ENCODE measurements at regions of chr13 and their contacts with region 1.

Region 1: DNA sequence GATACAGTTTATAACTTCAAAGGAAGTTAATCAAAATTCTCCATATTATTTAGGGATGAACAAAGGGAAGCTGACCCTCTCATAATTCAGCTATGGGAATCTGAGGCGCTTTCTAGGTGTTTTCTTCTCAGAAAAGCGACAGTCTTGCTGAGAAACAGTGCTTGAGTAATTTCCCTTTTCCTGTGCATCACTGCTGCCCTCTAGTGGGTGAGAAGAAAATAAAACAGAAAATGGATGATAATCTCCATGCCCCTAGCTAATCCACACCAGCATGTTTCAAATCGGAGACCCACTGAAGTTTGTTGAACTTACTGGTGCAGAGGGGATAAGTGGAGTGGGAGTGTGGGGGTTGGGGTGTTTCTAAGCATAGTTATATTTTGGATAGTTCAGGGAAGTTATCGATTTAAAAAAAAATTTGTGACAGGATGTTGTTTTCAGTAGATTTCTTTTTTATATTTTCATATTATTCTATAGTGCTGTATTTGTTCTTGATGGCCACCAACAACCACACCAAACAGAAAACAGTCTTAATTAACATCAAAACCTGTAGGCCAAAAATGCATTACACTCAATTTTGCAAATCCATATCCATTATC is 21.4 kb downstream of the LCP1 start:
- DNase-seq: no peak
- H3K4me3 ChIP-seq: no peak overlapping the region
- H3K27ac ChIP-seq: no peak overlapping the region
- H3K4me1 ChIP-seq: no peaks in the 10 kb centered on the region
- H3K27me3 ChIP-seq: no peaks in the 10 kb centered on the region
- CTCF ChIP-seq: peak; percentile 87

Region 2: DNA sequence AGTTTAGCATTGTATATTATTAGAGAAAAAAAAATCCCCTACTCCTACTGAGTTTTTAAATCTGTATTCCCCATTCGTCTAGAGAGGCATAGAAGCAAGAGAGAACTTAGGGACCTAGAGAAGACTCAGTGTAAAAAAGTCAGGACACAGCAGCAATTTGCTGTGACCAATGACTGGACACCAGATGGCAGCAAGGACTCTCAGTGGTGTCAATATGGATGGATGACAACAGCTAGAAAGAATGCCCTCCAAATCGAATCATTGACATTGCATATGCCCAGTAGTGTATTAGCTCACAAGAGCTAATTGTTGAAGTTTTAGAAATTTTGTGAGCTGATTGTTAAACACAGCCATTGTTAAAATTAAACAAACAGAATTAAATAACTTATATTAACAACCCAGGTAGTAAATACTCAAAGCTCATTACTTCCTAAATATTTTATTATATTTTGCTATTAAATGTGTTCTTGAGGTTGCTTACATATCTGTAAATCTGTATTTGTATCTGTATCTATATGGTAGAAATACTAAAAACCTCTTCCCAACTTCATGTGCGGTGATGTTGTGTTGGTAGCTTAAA is 353.0 kb before region 1 on chr13:
- CTCF ChIA-PET with region 1: no interaction called
- POLR2A ChIA-PET with region 1: no interaction called
- intact Hi-C with region 1: loop called (anchors 1 kb)
- DNase-seq: peak; percentile 24 to 56
- H3K4me3 ChIP-seq: no peak overlapping the region
- H3K27ac ChIP-seq: no peak overlapping the region
- H3K4me1 ChIP-seq: no peaks in the 10 kb centered on the region
- H3K27me3 ChIP-seq: peaks cover 7% of the 10 kb centered on the region; the same call in 1 of the 2 replicates
- CTCF ChIP-seq: peak; percentile 74

Region 3: DNA sequence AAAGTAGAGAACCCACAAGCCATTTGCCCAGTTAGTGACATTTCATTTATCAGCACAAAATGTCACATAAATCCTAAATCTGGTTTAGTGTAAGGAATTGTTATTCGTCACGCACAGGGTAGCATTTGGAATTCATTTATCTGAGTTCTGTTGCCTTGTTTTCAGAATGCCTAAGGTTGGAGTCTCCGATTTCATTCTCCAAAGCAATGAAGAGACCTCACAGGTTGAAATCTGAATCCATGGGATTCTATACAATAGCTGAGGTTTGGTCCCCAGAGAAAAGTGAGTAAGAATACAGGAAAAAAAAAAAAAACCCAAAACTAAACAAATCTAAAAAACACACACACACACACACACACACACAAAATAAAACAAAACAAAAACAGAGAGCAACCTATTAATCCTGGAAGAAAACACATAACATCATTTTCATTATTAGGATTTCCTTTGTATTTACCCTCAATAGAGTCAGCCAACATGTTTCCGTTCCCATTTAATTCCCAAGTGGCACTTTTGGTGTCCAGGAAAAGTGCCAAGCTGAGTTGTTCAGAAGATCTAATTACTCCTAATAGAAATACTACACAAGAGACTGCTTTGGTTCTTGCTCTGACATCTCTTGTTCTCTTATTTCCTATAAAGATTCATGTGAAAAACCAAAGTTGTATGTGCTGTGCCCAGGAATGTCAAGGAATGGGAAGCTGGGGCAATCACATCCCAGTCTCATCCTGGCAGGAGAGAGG is 356.2 kb after region 1 on chr13:
- CTCF ChIA-PET with region 1: no interaction called
- POLR2A ChIA-PET with region 1: no interaction called
- intact Hi-C with region 1: no loop called
- DNase-seq: no peak
- H3K4me3 ChIP-seq: no peak overlapping the region
- H3K27ac ChIP-seq: no peak overlapping the region
- H3K4me1 ChIP-seq: no peaks in the 10 kb centered on the region
- H3K27me3 ChIP-seq: peaks cover 6% of the 10 kb centered on the region; the same call in 1 of the 2 replicates
- CTCF ChIP-seq: no peak

Measured in PC-9 (cell line).